ENCODE measurements at regions of chr5 and their contacts with region 1.

Region 1: GRCh38 chr5:31692561-31693221 is 53.8 kb downstream of the PDZD2 start:
- DNase-seq: no peak
- H3K4me3 ChIP-seq: no peak overlapping the region
- H3K27ac ChIP-seq: no peak overlapping the region
- H3K4me1 ChIP-seq: no peaks in the 10 kb centered on the region
- H3K27me3 ChIP-seq: no peaks in the 10 kb centered on the region
- CTCF ChIP-seq: no peak

Region 2: DNA sequence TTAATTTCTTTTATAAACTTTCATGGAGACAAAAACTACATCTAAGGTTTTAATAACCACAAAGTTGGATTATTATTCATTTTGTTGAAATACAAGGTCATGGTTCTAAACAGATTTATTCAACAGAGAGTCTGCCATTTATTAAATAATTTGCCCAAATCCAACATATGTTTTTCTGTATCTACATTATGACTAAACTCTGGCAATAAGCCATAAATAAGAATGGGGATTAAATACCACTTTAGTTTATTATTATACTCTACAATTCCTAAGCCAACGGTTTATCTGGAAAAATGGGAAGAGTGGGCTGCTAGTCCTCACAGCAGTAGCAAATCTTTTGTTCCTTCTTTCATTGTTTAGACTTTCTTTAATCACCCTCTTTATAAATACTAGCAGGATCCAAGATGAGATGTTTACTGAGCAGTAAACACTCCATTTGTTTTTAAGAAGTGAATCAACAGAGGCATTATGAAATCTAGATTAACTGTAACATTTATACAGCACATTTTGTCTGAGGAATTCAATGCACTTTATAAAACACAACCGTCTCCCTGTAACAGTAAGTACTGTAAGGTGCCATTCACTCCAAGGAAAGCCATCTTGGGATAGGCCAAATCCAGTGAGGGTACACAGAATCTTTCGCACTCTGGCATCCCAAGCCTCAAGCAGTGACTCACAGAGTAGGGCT is 250.5 kb before region 1 on chr5:
- intact Hi-C with region 1: no loop called
- DNase-seq: no peak
- H3K4me3 ChIP-seq: no peak overlapping the region
- H3K27ac ChIP-seq: no peak overlapping the region
- H3K4me1 ChIP-seq: no peaks in the 10 kb centered on the region
- H3K27me3 ChIP-seq: no peaks in the 10 kb centered on the region
- CTCF ChIP-seq: no peak

Region 3: DNA sequence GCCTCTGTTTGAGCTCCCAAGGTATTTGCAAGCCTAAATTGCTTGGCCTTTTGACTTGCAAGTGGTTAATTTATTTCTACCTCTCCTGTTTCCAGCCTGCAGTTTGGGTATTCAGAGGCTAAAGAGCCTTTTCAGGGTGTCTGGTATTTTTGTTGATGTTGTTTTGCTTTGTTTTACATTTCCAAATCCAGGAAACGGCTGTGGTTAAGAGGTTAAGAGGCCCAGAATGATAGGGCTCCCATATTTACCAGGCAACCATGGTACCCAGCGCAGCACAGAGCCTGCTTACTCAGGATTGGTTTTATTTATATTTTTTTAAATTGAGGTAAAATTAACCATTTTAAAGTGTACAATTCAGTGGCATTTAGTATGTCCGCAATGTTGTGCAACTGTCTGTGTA is 38.3 kb after region 1 on chr5:
- intact Hi-C with region 1: loop called (anchors 2 kb)
- DNase-seq: no peak
- H3K4me3 ChIP-seq: no peak overlapping the region
- H3K27ac ChIP-seq: no peak overlapping the region
- H3K4me1 ChIP-seq: no peaks in the 10 kb centered on the region
- H3K27me3 ChIP-seq: no peaks in the 10 kb centered on the region
- CTCF ChIP-seq: no peak

Region 4: GRCh38 chr5:32450952-32451351 is 758.3 kb after region 1 on chr5:
- intact Hi-C with region 1: no loop called
- DNase-seq: no peak
- H3K4me3 ChIP-seq: no peak overlapping the region
- H3K27ac ChIP-seq: no peak overlapping the region
- H3K4me1 ChIP-seq: no peaks in the 10 kb centered on the region
- H3K27me3 ChIP-seq: no peaks in the 10 kb centered on the region
- CTCF ChIP-seq: no peak